Activated B cell treated with CpG ODN at 0.5 μM for 24 hours (primary cell): ENCODE measurements at regions of chr11 and their contacts with region 1.

Region 1: DNA sequence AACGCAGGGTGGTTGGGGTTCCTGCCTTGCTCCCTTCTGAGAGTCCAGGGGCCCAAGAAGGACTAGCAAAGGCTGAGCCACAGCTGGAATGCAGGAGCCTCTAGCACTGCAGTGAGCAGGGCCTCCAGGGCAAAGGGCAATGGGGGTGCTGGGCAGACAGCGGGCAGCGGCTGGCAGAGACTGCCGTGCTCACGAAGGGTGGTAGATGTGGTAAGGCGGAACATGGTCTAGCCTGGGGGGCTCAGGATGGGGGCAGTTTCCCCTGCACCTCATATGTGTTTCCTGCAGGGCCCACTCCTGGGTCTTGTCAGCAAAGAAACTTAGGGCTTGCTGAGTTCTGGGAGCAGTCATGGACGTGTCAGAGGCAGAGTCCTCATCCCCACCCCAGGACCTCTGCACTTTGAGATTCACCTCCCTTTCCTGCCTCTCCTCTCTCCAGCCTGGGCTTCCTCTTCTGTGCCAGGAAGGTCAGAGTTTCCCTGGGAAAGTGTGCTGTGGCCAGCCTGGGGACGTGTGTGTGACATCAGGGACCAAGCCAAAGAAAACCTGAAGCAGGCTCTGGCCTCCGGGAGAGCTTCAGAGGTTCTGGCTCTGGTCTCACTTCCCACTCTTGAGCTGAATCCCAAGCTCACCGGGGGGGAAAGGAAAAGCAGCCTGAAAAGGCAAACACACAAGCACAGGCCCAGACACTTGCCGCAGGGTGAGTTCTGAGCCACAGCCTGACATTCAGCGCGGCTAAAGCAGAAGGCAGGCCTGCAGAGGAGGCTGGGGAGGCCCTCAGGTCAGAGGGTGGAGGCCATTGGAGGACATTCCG is 4.4 kb downstream of the MOGAT2 start:
- DNase-seq: no peak
- ATAC-seq: no peak
- H3K4me3 Mint-ChIP-seq: no peak overlapping the region
- H3K27ac Mint-ChIP-seq: no peak overlapping the region
- H3K4me1 Mint-ChIP-seq: no peaks in the 10 kb centered on the region
- H3K27me3 Mint-ChIP-seq: no peaks in the 10 kb centered on the region
- CTCF ChIP-seq: no peak

Region 2: GRCh38 chr11:75656044-75656727 is 65.9 kb before region 1 on chr11:
- CTCF ChIA-PET with region 1: no interaction called
- POLR2A ChIA-PET with region 1: no interaction called
- intact Hi-C with region 1: no loop called
- DNase-seq: no peak
- ATAC-seq: no peak
- H3K4me3 Mint-ChIP-seq: no peak overlapping the region
- H3K27ac Mint-ChIP-seq: no peak overlapping the region
- H3K4me1 Mint-ChIP-seq: no peaks in the 10 kb centered on the region
- H3K27me3 Mint-ChIP-seq: peaks cover 20% of the 10 kb centered on the region
- CTCF ChIP-seq: no peak

Region 3: GRCh38 chr11:75768112-75768908 is 46.2 kb after region 1 on chr11 and contains the start of gene DGAT2:
- CTCF ChIA-PET with region 1: no interaction called
- POLR2A ChIA-PET with region 1: no interaction called
- intact Hi-C with region 1: loop called (anchors 1 kb)
- DNase-seq: peak; percentile 84
- ATAC-seq: peak; percentile 76
- H3K4me3 Mint-ChIP-seq: peak within 1 kb of the TSS; percentile 83
- H3K27ac Mint-ChIP-seq: peak within 1 kb of the TSS; percentile 87
- H3K4me1 Mint-ChIP-seq: peaks cover 56% of the 10 kb centered on the region
- H3K27me3 Mint-ChIP-seq: no peaks in the 10 kb centered on the region
- CTCF ChIP-seq: no peak
- total RNA-seq, gene DGAT2: 6.9 and 7.9 TPM in 2 replicates

Region 4: DNA sequence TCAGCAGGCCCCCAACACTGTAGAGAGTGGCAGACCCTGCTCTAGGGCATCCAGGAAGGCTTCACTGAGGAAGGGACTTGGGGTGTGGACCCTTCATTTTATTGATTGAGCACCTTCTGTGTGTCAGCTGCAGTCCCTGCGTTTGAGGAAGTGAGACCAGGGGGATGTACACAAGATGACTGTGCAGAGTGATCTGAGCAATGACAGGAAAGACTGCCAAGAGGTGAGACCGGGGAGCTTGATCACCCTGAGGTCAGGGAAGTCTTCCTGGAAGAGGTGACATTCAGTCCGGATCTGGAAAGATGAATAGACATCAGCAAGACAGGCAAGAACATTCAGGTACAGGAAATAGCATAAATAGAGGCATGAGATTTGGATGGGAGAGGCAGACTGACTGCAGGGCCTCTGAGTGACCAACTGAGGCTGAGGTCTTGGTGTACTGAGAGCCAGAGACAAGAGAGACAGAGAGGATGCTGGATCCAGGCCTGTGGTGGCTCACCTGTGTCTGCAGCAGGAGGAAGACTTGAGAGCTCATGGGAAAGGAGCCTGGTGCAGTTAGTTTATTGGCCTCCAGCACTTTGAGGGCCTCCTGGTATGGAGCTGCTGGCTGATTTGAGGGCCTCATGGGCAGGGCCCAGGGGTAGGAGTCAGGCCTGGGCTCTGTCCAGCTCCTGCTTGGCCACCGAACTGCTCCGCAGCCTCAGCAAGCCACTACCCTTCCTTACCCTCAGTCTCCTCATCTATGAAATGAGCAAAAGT is 51.7 kb after region 1 on chr11:
- CTCF ChIA-PET with region 1: no interaction called
- POLR2A ChIA-PET with region 1: no interaction called
- intact Hi-C with region 1: loop called (anchors 1 kb)
- DNase-seq: peak; percentile 42
- ATAC-seq: peak; percentile 80
- H3K4me3 Mint-ChIP-seq: peak overlapping the region; percentile 1
- H3K27ac Mint-ChIP-seq: peak overlapping the region; percentile 76
- H3K4me1 Mint-ChIP-seq: peaks cover 80% of the 10 kb centered on the region
- H3K27me3 Mint-ChIP-seq: no peaks in the 10 kb centered on the region
- CTCF ChIP-seq: no peak

Region 5: GRCh38 chr11:75802913-75803820 is 81.1 kb after region 1 on chr11:
- CTCF ChIA-PET with region 1: interaction called, 6 read pairs
- POLR2A ChIA-PET with region 1: no interaction called
- intact Hi-C with region 1: loop called (anchors 2 kb)
- DNase-seq: peak; percentile 50
- ATAC-seq: peak; percentile 95
- H3K4me3 Mint-ChIP-seq: no peak overlapping the region
- H3K27ac Mint-ChIP-seq: no peak overlapping the region
- H3K4me1 Mint-ChIP-seq: peaks cover 15% of the 10 kb centered on the region
- H3K27me3 Mint-ChIP-seq: no peaks in the 10 kb centered on the region
- CTCF ChIP-seq: peak; percentile 17

Region 6: DNA sequence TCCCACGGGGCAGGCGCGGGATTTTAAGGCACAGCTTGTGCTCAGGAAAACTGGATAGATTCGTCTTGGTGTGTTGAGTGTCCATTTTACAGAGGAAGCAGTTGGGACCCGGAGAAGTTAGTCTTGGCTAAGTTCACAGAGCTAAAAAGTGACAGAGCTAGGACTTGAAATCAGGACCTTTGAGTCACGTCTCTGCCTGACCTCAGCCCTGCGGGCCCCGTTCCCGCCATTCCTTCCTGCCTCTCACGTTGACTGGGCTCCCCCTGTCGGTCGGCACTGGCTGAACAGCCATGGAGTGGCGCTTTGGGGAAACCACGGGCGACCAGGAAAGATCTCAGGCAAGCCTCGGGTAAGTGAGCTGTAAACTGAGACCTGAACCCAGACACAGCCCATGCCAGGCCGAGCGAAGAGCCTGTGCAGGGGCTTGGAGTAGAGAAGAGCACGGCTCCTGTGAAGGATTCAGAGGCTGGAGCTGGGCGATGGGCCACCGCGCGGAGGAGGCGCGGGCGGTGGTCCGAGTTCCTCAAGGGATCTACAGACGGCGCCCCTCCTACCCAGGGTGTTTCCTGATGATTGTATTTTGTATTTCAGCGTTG is 430.1 kb after region 1 on chr11:
- CTCF ChIA-PET with region 1: interaction called, 3 read pairs
- POLR2A ChIA-PET with region 1: no interaction called
- intact Hi-C with region 1: loop called (anchors 1 kb)
- DNase-seq: peak; percentile 68
- ATAC-seq: peak; percentile 88
- H3K4me3 Mint-ChIP-seq: peak overlapping the region; percentile 80
- H3K27ac Mint-ChIP-seq: peak overlapping the region; percentile 41
- H3K4me1 Mint-ChIP-seq: peaks cover 22% of the 10 kb centered on the region
- H3K27me3 Mint-ChIP-seq: no peaks in the 10 kb centered on the region
- CTCF ChIP-seq: no peak

Region 7: GRCh38 chr11:76235233-76236091 is 513.4 kb after region 1 on chr11:
- CTCF ChIA-PET with region 1: no interaction called
- POLR2A ChIA-PET with region 1: no interaction called
- intact Hi-C with region 1: no loop called
- DNase-seq: peak; percentile 82
- ATAC-seq: peak; percentile 78
- H3K4me3 Mint-ChIP-seq: peak overlapping the region; percentile 95
- H3K27ac Mint-ChIP-seq: peak overlapping the region; percentile 95
- H3K4me1 Mint-ChIP-seq: peaks cover 32% of the 10 kb centered on the region
- H3K27me3 Mint-ChIP-seq: peaks cover 7% of the 10 kb centered on the region
- CTCF ChIP-seq: no peak

Region 8: GRCh38 chr11:76318744-76319384 is 596.8 kb after region 1 on chr11:
- CTCF ChIA-PET with region 1: interaction called, 6 read pairs
- POLR2A ChIA-PET with region 1: no interaction called
- intact Hi-C with region 1: loop called (anchors 1 kb)
- DNase-seq: peak; percentile 73
- ATAC-seq: peak; percentile 97
- H3K4me3 Mint-ChIP-seq: no peak overlapping the region
- H3K27ac Mint-ChIP-seq: no peak overlapping the region
- H3K4me1 Mint-ChIP-seq: peaks cover 2% of the 10 kb centered on the region
- H3K27me3 Mint-ChIP-seq: peaks cover 40% of the 10 kb centered on the region
- CTCF ChIP-seq: no peak